ENCODE measurements at regions of chr5 and their contacts with region 1.

Region 1: GRCh38 chr5:172640822-172641358 is at the start of gene NEURL1B:
- DNase-seq: peak; percentile 88
- total RNA-seq, gene NEURL1B: 32.9 to 38.6 TPM

Region 2: GRCh38 chr5:172479044-172479783 is 161.7 kb before region 1 on chr5:
- intact Hi-C with region 1: loop called in 1 of 2 experiments (anchors 5 kb)
- DNase-seq: peak; percentile 95

Region 3: DNA sequence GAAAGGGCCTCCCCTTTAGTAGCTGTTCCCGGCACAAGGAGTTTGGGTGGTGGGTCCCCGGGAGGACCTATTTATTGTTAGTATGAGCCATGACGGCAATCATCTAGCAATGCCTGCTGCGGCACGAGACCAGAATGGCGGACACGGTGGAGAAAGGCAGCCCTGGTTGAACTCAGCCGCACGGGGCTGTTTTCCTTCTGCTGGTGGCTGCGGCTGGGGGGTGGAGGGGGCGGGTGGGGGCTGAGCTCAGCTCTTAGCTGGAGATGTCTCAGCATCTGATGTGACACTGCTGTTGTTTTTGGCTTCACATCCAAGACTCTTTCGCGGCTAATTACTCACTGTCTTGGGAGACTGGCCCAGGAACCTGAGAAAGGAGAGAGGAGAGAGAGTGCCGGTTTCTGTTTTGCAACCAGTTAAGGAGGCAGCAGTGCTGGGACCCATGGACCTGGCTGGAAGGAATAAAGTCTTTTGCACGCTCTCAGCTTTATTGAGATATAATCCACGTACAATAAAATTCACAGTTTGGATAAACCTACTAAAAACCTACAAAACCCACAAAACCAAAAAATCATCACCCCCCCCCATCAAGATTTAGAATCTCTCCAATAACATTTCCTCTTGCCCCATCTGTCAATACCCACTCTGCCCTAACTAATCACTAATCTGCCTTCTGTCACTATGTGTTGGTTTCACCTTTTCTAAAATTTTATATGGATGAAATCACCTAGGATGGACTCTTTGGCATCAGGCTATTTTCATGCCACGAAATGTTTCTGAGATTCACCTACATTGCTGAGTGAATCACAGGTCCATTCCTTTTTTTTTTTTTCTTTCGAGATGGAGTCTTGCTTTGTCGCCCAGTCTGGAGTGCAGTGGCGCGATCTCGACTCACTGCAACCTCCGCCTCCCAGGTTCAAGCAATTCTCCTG is 81.6 kb before region 1 on chr5:
- intact Hi-C with region 1: loop called (anchors 5 to 10 kb)
- DNase-seq: no peak

Measured in posterior vena cava (tissue), 2 donors.